ENCODE measurements at regions of chr13 and their contacts with region 1.

Region 1: DNA sequence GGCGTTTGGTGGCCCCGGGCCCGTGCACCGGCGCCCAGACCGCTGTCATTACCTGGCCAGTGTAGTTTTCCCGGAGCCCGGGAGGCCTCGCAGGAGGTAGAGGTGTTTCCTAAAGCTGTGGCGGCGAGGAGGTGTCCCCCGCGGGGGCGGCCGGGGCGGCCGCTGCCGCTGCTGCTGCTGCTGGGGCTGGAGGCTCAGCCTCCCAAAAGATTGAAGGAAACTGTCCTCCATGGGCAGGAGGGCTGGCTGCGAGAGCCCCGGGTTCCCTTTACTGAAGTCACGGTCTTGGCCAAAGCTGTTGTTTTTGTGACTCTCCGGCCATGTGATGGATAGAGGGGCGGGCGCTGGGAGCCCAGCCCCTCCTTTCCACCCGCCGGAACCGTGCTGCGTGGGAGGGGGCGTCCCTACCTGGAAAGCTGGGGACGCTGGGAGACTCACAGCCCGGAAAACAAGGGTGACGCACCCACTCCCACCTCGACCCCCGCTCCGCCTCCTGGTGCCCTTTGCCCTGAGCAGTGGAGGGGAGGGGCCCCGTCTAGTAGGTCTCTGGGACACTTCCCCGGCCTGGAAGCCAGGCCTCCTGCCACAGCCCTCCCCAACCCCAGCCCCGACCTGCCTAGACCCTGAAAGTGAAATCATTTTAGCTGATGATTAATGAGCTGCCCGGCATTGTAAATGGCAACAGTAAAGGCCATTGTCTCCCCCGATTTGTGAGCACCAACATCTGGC is at the start of gene N4BP2L1:
- DNase-seq: peak; percentile 95
- H3K4me3 Mint-ChIP-seq: peak within 1 kb of the TSS; percentile 94
- H3K27ac Mint-ChIP-seq: peak within 1 kb of the TSS; percentile 97
- H3K4me1 Mint-ChIP-seq: peaks cover 31% of the 10 kb centered on the region
- H3K27me3 Mint-ChIP-seq: no peaks in the 10 kb centered on the region
- total RNA-seq, gene N4BP2L1: 22.6 TPM

Region 2: DNA sequence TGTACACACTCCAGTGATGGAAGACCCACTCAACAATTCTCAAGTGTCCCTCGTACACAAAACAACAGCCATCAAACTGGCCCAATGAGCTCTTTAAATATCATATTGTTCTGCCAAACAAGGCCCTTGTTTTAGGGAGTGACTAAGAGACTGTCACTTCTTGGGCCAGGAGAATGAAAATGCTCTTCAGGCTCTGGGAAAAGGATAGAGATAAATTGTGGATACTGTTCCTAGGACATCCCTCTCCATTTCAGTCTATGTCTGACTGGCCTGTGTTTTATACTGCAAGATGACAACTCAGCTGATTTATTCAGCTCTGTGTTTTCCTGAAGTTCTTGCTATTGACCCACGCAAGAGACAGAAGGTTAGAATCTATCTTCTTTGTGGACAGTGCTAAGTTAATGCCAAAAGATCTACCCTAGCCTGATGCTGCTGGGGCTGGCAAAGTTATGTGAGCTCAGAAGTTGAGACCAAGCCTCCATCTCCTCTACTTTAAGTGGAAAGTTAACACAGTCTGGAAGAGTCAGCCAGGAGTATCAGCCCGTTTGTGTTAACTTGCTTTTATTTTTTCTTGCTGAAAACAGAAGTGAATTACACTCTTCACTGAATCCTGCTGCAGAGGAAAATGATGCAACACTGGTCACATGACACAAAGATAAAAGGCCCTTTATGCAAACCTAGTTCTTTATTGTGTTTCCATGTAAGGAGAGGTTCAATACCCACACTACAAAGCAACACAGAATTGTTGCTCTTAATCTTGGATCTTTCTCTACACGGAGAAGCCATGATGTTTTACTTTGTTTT is 381.8 kb before region 1 on chr13:
- CTCF ChIA-PET with region 1: no interaction called
- intact Hi-C with region 1: loop called (anchors 5 kb)
- DNase-seq: peak; percentile 61
- H3K4me3 Mint-ChIP-seq: peak overlapping the region; percentile 55
- H3K27ac Mint-ChIP-seq: peak overlapping the region; percentile 93
- H3K4me1 Mint-ChIP-seq: peaks cover 69% of the 10 kb centered on the region
- H3K27me3 Mint-ChIP-seq: no peaks in the 10 kb centered on the region

Region 3: GRCh38 chr13:32228330-32229041 is 199.5 kb before region 1 on chr13:
- CTCF ChIA-PET with region 1: no interaction called
- intact Hi-C with region 1: no loop called
- DNase-seq: no peak
- H3K4me3 Mint-ChIP-seq: no peak overlapping the region
- H3K27ac Mint-ChIP-seq: no peak overlapping the region
- H3K4me1 Mint-ChIP-seq: no peaks in the 10 kb centered on the region
- H3K27me3 Mint-ChIP-seq: no peaks in the 10 kb centered on the region

Region 4: GRCh38 chr13:32443111-32443510 is 15.1 kb after region 1 on chr13:
- CTCF ChIA-PET with region 1: interaction called, 7 read pairs
- intact Hi-C with region 1: loop called (anchors 1 kb)
- DNase-seq: peak; percentile 61
- H3K4me3 Mint-ChIP-seq: no peak overlapping the region
- H3K27ac Mint-ChIP-seq: no peak overlapping the region
- H3K4me1 Mint-ChIP-seq: peaks cover 14% of the 10 kb centered on the region
- H3K27me3 Mint-ChIP-seq: no peaks in the 10 kb centered on the region

Region 5: DNA sequence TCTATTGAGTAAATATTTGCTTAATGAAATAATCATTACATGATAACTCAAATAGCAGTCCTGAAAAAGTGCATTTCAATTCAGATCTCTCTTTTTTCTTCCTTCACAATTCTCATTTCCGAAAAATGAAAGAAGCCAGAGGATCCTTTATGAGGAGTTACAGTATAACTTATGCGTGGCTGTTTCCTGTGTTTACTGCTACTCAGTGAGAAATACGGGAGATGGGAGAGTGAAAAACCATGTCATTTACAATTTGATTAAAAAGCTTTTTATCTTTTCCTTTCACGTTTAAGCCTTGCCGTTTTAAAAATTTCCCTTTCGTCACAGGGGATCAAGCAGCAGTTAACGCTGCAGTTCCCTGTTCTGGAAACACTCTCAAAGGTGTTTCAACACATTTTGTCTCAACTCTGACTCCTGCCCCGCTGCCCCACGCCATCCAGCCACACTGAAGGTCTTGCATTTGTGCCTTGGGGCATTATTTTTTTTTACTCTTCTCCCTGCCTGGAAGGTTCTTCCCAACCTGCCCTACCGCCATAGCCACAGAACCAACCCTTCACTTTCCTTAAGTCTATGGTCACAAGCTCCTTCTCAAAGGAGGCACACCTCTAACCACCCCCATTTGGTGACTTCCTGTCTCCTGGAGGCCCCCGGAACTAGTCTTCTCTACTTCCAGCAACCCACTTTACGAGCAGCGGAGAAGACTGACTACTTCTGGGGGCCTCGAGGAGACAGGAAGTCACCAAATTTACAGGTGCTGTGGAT is 605.2 kb after region 1 on chr13:
- CTCF ChIA-PET with region 1: no interaction called
- intact Hi-C with region 1: loop called (anchors 5 kb)
- DNase-seq: peak; percentile 56
- H3K4me3 Mint-ChIP-seq: peak overlapping the region; percentile 74
- H3K27ac Mint-ChIP-seq: peak overlapping the region; percentile 87
- H3K4me1 Mint-ChIP-seq: peaks cover 7% of the 10 kb centered on the region
- H3K27me3 Mint-ChIP-seq: peaks cover 1% of the 10 kb centered on the region

Region 6: GRCh38 chr13:33817901-33818706 is 1390.1 kb after region 1 on chr13 and contains the start of gene RFC3:
- CTCF ChIA-PET with region 1: no interaction called
- intact Hi-C with region 1: loop called (anchors 2 kb)
- DNase-seq: peak; percentile 96
- H3K4me3 Mint-ChIP-seq: peak within 1 kb of the TSS; percentile 94
- H3K27ac Mint-ChIP-seq: peak within 1 kb of the TSS; percentile 90
- H3K4me1 Mint-ChIP-seq: peaks cover 27% of the 10 kb centered on the region
- H3K27me3 Mint-ChIP-seq: no peaks in the 10 kb centered on the region
- total RNA-seq, gene RFC3: 51.6 TPM

Measured in activated naive CD4-positive, alpha-beta T cell treated with anti-CD3 and anti-CD28 coated beads for 36 hours (primary cell).